Dorsolateral prefrontal cortex (tissue), 120 donors: ENCODE measurements at regions of chr9 and their contacts with region 1.

Region 1: DNA sequence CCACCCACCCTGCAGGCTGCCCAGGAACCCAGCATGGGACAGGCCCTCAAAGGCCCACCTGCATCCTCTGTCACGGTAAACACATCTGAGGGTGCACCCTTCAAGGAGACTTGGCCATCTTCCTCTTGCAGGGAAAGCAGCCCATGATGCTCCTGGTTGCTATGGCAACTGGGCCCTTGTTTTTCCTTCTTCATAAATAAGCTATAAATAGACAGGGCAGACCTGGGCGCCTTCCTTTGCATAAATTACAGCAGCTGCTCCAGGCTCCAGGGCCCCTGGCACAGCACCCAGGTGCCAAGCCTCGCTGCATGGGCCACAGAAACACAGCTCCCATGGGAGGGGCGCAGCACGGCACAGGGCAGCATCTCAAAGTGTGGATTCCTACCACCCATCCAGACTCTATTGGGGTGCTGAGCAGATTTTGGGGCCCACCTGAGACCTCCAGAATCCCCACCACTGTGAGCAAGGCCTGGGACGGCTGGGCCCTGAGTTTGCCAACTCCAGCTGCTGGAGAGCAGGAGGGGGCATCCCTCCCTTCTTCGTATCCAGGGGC is 5.8 kb upstream of the PSMB7 start:
- DNase-seq: peak in 6 of 10 donors; percentile 38 to 61 (median 50)
- H3K4me3 ChIP-seq: no peak overlapping the region
- H3K27ac ChIP-seq: peak overlapping the region in 44 of 59 donors; percentile 2 to 87 (median 60)
- H3K27me3 ChIP-seq: no peaks in the 10 kb centered on the region
- CTCF ChIP-seq: no peak

Region 2: DNA sequence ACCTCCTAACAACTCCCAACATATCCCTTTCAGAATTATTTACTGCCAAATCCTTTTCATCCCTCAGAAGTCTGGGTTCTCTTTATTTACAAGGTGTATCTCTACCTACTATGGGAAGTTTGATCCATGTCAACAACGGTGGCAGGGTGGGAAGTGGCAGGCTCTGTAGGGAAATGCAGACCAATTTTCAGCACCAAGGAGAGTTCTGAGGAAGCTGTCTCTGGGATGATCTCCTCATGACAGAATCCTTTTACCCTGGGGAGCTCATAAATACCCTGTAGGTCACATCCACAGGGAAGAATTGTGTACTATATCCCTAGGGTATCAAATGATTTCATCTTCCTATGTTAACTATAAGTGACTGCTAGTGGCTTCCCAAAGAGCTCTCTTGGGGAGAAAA is 271.1 kb before region 1 on chr9:
- intact Hi-C with region 1: no loop called
- DNase-seq: no peak
- H3K4me3 ChIP-seq: no peak overlapping the region
- H3K27ac ChIP-seq: no peak overlapping the region
- H3K27me3 ChIP-seq: peaks cover 0 to 5% (median 0%) of the 10 kb centered on the region in 45 donors
- CTCF ChIP-seq: no peak

Region 3: DNA sequence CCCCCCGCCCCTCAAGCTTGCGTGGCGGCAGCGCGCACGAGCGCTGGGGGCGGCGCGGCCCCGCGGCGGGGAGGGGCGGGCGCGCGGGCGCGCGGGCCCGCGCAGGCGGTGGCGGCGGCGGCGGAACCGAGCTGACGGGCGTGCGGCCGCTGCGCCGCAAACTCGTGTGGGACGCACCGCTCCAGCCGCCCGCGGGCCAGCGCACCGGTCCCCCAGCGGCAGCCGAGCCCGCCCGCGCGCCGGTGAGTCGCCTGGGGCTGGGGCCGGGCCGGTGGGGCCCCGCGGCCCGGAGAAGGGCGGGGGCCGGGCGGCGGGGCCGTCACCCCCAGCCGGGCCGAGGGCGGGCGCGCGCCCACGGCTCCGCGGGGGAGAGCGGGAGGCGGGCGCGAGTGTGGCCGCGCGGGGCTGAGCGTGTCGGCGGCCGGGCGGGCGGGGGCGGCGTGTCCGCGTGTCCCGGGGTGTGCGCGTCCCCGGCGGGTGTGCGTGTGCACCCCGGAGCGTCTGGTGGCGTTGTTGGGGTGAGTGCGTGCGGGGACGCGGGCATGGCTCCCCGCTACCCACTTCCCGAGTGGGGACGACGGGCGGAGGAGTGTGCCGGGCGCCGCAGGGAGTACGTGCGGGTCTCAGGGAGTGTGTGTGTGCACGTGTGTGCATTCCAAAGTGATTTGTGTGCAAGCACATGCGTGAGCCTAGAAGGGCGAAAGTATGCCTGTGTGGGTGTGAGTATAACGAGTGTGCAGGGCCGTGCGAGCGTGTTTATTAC is 163.0 kb before region 1 on chr9 and contains the start of gene NEK6:
- intact Hi-C with region 1: no loop called
- DNase-seq: peak in 3 of 10 donors; percentile 24 to 70 (median 27)
- H3K4me3 ChIP-seq: peak within 1 kb of the TSS; percentile 59 to 91 (median 75)
- H3K27ac ChIP-seq: peak within 1 kb of the TSS in 58 of 59 donors; percentile 0 to 95 (median 80)
- H3K27me3 ChIP-seq: no peaks in the 10 kb centered on the region
- CTCF ChIP-seq: no peak
- total RNA-seq, gene NEK6: 31.2 to 112 (median 51.6) TPM

Region 4: DNA sequence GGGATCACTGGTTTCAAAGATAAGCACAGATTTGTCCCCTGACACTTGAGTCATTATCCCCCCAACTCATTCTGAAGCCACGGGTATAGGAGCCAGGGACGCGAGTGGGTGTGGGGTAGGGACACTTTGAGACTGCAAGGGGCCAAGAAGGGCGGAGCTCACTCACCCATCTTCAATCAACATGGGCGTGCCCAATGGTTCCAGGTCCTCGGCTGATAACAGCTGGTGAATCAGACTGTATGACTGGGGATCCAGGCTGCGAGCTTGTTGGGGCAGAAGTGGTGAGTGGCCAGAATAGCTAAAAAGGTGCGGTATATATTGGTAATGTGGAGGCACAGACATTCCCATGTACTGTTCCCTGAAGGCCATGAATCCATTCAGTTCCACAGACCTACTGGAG is 116.9 kb after region 1 on chr9:
- intact Hi-C with region 1: loop called (anchors 2 to 5 kb)
- DNase-seq: no peak
- H3K4me3 ChIP-seq: no peak overlapping the region
- H3K27ac ChIP-seq: no peak overlapping the region
- H3K27me3 ChIP-seq: no peaks in the 10 kb centered on the region
- CTCF ChIP-seq: no peak